Breast epithelium (tissue), 4 donors: ENCODE measurements at regions of chr5 and their contacts with region 1.

Region 1: GRCh38 chr5:157908459-157908858 is 49.5 kb upstream of the CLINT1 start:
- DNase-seq: no peak
- H3K4me3 ChIP-seq: no peak overlapping the region
- H3K27ac ChIP-seq: no peak overlapping the region
- H3K4me1 ChIP-seq: no peaks in the 10 kb centered on the region
- H3K27me3 ChIP-seq: no peaks in the 10 kb centered on the region
- CTCF ChIP-seq: no peak
- POLR2A ChIP-seq: no peak

Region 2: DNA sequence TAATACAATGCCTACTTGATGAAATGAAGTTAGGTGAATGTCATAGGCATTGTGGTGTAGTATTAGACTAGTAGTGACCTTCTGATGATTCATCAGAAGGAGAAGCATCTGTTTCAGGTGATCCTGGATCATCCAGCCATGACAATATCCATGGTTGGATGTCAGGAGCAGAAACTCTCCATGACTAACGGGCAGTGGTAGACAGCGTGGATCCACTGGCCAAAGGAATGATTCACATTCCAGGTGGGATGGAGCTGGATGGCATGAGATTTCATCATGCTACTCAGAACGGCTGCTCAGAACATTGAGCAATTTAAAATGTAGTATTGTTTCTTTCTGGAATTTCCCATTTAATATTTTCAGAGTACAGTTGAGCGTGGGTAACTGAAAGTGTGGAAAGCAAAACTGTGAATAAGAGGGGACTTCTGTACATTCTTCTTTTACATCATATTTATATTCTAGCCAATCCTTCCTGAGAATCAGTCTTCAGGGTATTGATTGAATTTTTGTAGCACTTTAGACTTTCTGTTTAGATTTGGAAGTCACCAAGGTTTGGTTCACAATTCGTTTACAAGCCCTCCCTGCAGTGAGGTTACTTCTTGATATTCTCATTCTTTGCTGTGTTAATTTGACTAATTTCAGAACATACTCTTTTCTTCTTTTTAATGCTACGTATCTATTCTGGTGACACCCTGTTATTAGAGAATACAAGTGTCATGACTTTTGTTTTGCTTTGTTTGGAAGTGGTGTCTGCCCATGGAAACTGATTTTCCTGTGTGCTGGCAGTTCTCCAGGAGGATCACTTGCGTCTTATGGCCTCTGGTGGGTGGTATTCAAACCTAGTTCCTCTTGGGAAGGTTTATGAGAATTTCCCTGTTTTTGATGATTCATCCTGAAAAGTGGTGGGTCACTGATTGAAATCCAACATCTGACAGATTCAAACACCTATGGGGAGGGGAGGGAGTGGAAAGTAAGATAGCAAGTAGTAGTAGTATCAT is 37.3 kb before region 1 on chr5:
- intact Hi-C with region 1: no loop called
- DNase-seq: no peak
- H3K4me3 ChIP-seq: no peak overlapping the region
- H3K27ac ChIP-seq: no peak overlapping the region
- H3K4me1 ChIP-seq: no peaks in the 10 kb centered on the region
- H3K27me3 ChIP-seq: no peaks in the 10 kb centered on the region
- CTCF ChIP-seq: no peak
- POLR2A ChIP-seq: no peak

Region 3: GRCh38 chr5:159262859-159263567 is 1354.6 kb after region 1 on chr5 and contains the start of gene UBLCP1:
- intact Hi-C with region 1: loop called (anchors 5 kb)
- DNase-seq: peak; percentile 66 to 68
- H3K4me3 ChIP-seq: peak within 1 kb of the TSS; percentile 85 to 98 (median 90)
- H3K27ac ChIP-seq: peak within 1 kb of the TSS; percentile 90 to 92
- H3K4me1 ChIP-seq: no peaks in the 10 kb centered on the region
- H3K27me3 ChIP-seq: no peaks in the 10 kb centered on the region
- CTCF ChIP-seq: no peak
- POLR2A ChIP-seq: no peak
- total RNA-seq, gene UBLCP1: 17.0 to 29.5 (median 24.3) TPM